Activated naive CD4-positive, alpha-beta T cell treated with anti-CD3 and anti-CD28 coated beads for 36 hours (primary cell): ENCODE measurements at regions of chr1 and their contacts with region 1.

Region 1: DNA sequence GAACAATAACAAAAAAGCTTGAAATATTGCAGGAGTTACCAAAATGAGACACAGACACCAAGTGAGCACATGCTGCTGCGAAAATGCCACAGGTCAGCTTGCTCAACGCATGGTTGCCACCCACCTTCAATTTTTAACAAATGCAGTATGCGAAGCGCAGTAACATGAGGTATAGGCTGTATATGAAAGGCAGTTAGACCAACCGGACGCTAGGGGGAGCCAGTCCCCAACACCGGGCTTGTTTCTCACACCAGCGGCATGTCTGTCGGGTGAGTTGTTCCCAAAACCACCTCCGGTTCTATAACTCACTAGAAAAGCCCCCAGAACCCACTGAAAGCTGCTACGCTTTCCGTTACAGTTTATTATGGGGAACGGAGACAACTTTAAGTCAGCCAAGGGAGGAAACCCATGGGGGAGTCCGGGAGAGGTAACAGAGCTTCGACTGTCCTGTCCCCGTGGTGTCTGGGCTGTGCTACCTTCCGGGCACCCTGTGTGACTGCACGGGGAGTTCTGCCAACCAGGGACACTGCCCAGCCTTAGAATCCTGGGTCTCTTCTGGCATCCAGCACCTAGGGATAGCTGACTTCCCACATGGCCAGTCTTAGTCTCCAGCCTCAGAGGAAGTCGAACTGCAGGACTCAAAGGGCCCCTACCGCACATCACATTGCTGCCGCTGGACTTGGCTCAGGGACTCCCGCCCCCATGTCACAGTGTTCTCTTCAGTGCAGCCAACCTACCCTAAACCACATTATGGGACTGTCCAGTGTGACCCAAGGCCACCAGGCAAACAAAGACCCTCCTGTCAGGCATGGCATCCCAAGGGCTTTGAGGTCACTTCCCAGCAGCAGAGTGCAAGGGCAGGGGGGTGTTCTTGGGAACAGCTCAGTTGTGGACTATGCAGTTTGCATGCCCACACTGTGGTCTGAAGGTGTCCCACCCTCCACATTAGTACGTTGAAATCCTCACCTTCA is 14.0 kb downstream of the RNF187 start:
- DNase-seq: peak; percentile 97
- H3K4me3 Mint-ChIP-seq: peak overlapping the region; percentile 40
- H3K27ac Mint-ChIP-seq: peak overlapping the region; percentile 73
- H3K4me1 Mint-ChIP-seq: peaks cover 20% of the 10 kb centered on the region
- H3K27me3 Mint-ChIP-seq: no peaks in the 10 kb centered on the region

Region 2: GRCh38 chr1:228131766-228132165 is 369.4 kb before region 1 on chr1:
- CTCF ChIA-PET with region 1: interaction called, 4 read pairs
- intact Hi-C with region 1: loop called (anchors 5 kb)
- DNase-seq: no peak
- H3K4me3 Mint-ChIP-seq: no peak overlapping the region
- H3K27ac Mint-ChIP-seq: no peak overlapping the region
- H3K4me1 Mint-ChIP-seq: peaks cover 3% of the 10 kb centered on the region
- H3K27me3 Mint-ChIP-seq: peaks cover 10% of the 10 kb centered on the region

Region 3: GRCh38 chr1:228378090-228378872 is 122.9 kb before region 1 on chr1:
- CTCF ChIA-PET with region 1: no interaction called
- intact Hi-C with region 1: loop called (anchors 1 kb)
- DNase-seq: peak; percentile 80
- H3K4me3 Mint-ChIP-seq: peak overlapping the region; percentile 74
- H3K27ac Mint-ChIP-seq: no peak overlapping the region
- H3K4me1 Mint-ChIP-seq: peaks cover 11% of the 10 kb centered on the region
- H3K27me3 Mint-ChIP-seq: peaks cover 14% of the 10 kb centered on the region

Region 4: DNA sequence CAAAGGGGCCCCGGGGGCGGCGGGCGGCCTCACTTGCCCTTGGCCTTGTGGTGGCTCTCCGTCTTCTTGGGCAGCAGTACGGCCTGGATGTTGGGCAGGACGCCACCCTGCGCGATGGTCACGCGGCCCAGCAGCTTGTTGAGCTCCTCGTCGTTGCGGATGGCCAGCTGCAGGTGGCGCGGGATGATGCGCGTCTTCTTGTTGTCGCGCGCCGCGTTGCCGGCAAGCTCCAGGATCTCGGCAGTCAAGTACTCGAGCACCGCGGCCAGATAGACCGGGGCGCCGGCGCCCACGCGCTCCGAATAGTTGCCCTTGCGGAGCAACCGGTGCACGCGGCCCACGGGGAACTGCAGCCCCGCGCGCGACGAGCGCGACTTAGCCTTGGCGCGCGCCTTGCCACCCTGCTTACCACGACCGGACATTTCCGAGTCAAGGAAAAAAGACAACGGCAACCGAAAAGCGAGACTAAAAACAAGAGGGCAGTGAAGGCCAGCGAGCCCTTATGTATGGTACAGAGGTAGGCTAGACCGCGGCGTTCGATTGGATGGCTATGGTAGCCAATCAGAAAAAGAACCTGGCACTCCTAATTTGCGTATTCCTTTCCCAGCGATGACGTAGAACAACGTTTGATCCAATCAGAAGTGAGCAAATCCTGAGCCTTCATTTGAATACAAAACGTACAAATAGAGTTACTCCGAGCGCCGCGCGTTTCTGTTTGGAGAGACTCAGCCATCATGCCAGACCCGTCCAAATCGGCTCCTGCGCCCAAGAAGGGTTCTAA is 43.6 kb before region 1 on chr1:
- CTCF ChIA-PET with region 1: interaction called, 8 read pairs
- intact Hi-C with region 1: loop called (anchors 1 kb)
- DNase-seq: peak; percentile 93
- H3K4me3 Mint-ChIP-seq: peak overlapping the region; percentile 95
- H3K27ac Mint-ChIP-seq: peak overlapping the region; percentile 97
- H3K4me1 Mint-ChIP-seq: peaks cover 32% of the 10 kb centered on the region
- H3K27me3 Mint-ChIP-seq: peaks cover 7% of the 10 kb centered on the region

Region 5: GRCh38 chr1:228471762-228472398 is 29.3 kb before region 1 on chr1:
- CTCF ChIA-PET with region 1: interaction called, 13 read pairs
- intact Hi-C with region 1: no loop called
- DNase-seq: peak; percentile 39
- H3K4me3 Mint-ChIP-seq: no peak overlapping the region
- H3K27ac Mint-ChIP-seq: no peak overlapping the region
- H3K4me1 Mint-ChIP-seq: no peaks in the 10 kb centered on the region
- H3K27me3 Mint-ChIP-seq: peaks cover 25% of the 10 kb centered on the region

Region 6: DNA sequence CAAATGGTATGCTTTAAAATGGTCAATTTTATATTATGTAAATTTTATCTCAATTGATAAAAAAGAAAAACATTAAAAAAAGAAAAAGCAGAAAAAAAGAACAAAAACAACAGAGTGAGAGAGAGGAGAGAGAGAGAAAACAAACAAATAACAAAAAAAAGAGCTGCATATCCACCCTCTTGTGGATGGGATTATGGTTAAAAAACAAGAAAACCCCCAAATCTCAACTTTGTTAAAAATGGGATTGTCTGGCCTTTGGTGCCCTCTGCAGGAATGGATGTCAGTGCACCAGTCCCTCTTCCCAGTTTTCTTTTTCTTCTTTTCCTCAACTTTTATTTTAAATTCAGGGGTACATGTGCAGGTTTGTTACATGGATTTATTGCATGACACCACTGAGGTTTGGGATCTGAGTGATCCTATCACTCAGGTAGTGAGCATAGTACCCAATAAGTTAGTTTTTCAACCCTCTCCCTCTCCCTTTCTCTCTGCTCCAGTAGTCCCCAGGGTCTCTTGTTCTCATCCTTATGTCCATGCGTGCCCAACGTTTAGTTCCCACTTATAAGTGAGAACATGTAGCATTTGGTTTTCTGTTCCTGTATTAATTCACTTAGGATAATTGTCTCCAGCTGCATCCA is 14.1 kb after region 1 on chr1:
- CTCF ChIA-PET with region 1: interaction called, 30 read pairs
- intact Hi-C with region 1: loop called (anchors 1 kb)
- DNase-seq: peak; percentile 60
- H3K4me3 Mint-ChIP-seq: no peak overlapping the region
- H3K27ac Mint-ChIP-seq: no peak overlapping the region
- H3K4me1 Mint-ChIP-seq: peaks cover 4% of the 10 kb centered on the region
- H3K27me3 Mint-ChIP-seq: peaks cover 2% of the 10 kb centered on the region

Region 7: DNA sequence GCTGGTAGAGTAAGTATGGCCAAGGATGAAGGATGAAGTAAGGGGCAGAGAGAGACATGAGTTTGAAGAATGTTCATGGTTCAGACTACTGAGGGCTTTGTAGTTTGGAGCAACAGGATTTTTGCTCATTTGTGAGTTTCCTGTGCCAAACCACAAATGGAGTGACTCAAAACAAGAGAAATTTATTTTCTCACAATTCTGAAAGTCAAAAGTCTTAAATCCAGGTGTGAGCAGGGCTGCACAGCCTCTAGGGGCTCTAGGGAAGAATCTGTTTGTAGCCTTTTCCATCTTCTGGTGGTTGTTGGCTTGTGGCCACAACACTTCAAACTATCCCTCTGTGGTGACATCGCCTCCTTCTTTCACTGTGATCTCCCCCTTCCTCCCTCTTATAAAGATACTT is 293.0 kb after region 1 on chr1:
- CTCF ChIA-PET with region 1: no interaction called
- intact Hi-C with region 1: no loop called
- DNase-seq: peak; percentile 52
- H3K4me3 Mint-ChIP-seq: no peak overlapping the region
- H3K27ac Mint-ChIP-seq: no peak overlapping the region
- H3K4me1 Mint-ChIP-seq: peaks cover 6% of the 10 kb centered on the region
- H3K27me3 Mint-ChIP-seq: no peaks in the 10 kb centered on the region

Region 8: GRCh38 chr1:229148041-229148671 is 647.0 kb after region 1 on chr1:
- CTCF ChIA-PET with region 1: no interaction called
- intact Hi-C with region 1: no loop called
- DNase-seq: no peak
- H3K4me3 Mint-ChIP-seq: no peak overlapping the region
- H3K27ac Mint-ChIP-seq: no peak overlapping the region
- H3K4me1 Mint-ChIP-seq: no peaks in the 10 kb centered on the region
- H3K27me3 Mint-ChIP-seq: no peaks in the 10 kb centered on the region

Region 9: GRCh38 chr1:229227298-229227919 is 726.2 kb after region 1 on chr1:
- CTCF ChIA-PET with region 1: no interaction called
- intact Hi-C with region 1: loop called (anchors 2 kb)
- DNase-seq: peak; percentile 85
- H3K4me3 Mint-ChIP-seq: no peak overlapping the region
- H3K27ac Mint-ChIP-seq: no peak overlapping the region
- H3K4me1 Mint-ChIP-seq: peaks cover 21% of the 10 kb centered on the region
- H3K27me3 Mint-ChIP-seq: peaks cover 2% of the 10 kb centered on the region